Lower leg skin (tissue), 4 donors: ENCODE measurements at regions of chr16 and their contacts with region 1.

Region 1: GRCh38 chr16:65510850-65511249 is 389.0 kb upstream of the CDH11 start:
- DNase-seq: no peak
- H3K4me3 ChIP-seq: no peak overlapping the region
- CTCF ChIP-seq: no peak
- POLR2A ChIP-seq: no peak

Region 2: GRCh38 chr16:65441501-65441900 is 69.3 kb before region 1 on chr16:
- intact Hi-C with region 1: loop called (anchors 2 kb)
- DNase-seq: no peak
- H3K4me3 ChIP-seq: no peak overlapping the region
- CTCF ChIP-seq: no peak
- POLR2A ChIP-seq: no peak